Dorsolateral prefrontal cortex (tissue), 120 donors: ENCODE measurements at regions of chr19 and their contacts with region 1.

Region 1: GRCh38 chr19:51525686-51526085 is 5.8 kb downstream of the SIGLEC6 start:
- DNase-seq: no peak
- H3K4me3 ChIP-seq: no peak overlapping the region
- H3K27ac ChIP-seq: no peak overlapping the region
- H3K27me3 ChIP-seq: peaks cover 0 to 38% (median 6%) of the 10 kb centered on the region in 45 donors
- CTCF ChIP-seq: no peak

Region 2: DNA sequence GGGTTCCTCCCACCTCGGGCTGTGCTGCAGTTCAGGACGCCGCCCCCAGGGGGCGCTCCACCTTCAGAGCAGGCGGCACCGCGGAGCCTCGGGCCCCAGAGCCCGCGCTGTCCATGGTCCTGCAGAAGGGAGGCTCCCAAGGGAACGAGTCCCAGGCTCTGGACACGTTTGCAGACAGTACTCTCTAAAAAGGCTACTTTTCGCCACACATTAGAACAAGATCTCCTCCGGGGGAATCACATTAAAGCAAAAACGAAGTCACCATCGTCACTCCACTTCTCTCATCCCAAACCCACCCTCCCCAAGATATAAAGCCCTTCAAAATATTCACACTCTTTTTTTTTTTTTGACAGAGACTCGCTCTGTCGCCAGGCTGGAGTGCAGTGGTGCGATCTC is 103.6 kb before region 1 on chr19:
- intact Hi-C with region 1: no loop called
- DNase-seq: peak; percentile 53 to 79 (median 64)
- H3K4me3 ChIP-seq: peak overlapping the region in 9 of 59 donors; percentile 19 to 41 (median 26)
- H3K27ac ChIP-seq: no peak overlapping the region
- H3K27me3 ChIP-seq: peaks cover 0 to 37% (median 7%) of the 10 kb centered on the region in 45 donors
- CTCF ChIP-seq: peak; percentile 61 to 100 (median 95)

Region 3: DNA sequence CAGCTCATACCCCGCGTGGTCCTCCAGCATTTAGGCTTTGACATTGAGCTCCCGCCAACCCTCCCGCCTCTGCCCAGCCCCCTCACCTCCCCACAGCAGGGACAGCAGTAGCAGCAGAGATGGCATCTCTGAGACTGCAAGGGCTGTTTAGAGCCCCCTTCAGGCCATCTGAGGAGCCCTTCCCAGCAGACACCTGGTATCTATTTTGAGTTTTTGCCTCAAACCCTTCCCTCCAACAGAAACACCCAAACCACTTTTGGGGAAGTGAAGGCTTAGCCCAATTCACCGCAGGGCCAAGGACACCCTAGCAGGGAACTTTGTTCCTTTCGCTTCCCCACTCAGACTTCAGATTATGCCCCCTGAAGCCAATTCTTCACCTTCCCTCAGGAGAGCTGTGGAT is 39.1 kb after region 1 on chr19:
- intact Hi-C with region 1: loop called in 1 of 2 experiments (anchors 2 kb)
- DNase-seq: no peak
- H3K4me3 ChIP-seq: no peak overlapping the region
- H3K27ac ChIP-seq: no peak overlapping the region
- H3K27me3 ChIP-seq: peaks cover 0 to 48% (median 14%) of the 10 kb centered on the region in 45 donors
- CTCF ChIP-seq: no peak